Left colon (tissue), 2 donors: ENCODE measurements at regions of chr16 and their contacts with region 1.

Region 1: GRCh38 chr16:24568392-24568791 is 29.0 kb downstream of the RBBP6 start:
- DNase-seq: no peak
- ATAC-seq: no peak

Region 2: GRCh38 chr16:24800586-24800985 is 232.2 kb after region 1 on chr16:
- intact Hi-C with region 1: loop called in 1 of 2 experiments (anchors 10 kb)
- DNase-seq: no peak
- ATAC-seq: peak; percentile 39